Right ventricle myocardium inferior (tissue), 1 donor: ENCODE measurements at regions of chr3 and their contacts with region 1.

Region 1: DNA sequence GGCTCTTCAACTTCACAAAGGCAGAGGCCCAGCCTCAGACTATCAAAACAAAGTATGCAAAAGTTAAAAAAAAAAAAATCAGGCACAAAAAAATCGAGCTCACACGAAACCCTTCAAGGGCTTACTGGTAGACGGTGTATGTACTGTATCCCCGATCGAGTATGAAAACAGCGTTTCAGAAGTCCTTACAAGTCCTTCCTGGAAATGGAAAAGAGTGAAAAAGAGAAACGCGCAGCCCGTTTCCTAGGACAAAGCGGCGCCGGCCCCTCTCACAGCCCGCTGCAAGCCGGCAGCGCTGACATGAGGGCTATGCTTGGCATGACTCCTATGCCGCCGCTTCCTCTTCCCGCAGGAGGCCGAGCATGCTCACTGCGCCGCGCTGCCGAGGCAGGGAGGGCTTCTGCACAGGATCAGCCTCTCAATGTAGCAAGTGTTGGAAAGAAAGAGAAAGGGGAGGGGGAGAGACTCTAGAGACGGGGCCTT is at the start of gene VGLL4:
- DNase-seq: peak; percentile 96
- ATAC-seq: peak; percentile 93
- total RNA-seq, gene VGLL4: 26.8 TPM

Region 2: GRCh38 chr3:11019116-11019819 is 624.4 kb before region 1 on chr3:
- intact Hi-C with region 1: no loop called
- DNase-seq: no peak
- ATAC-seq: no peak

Region 3: DNA sequence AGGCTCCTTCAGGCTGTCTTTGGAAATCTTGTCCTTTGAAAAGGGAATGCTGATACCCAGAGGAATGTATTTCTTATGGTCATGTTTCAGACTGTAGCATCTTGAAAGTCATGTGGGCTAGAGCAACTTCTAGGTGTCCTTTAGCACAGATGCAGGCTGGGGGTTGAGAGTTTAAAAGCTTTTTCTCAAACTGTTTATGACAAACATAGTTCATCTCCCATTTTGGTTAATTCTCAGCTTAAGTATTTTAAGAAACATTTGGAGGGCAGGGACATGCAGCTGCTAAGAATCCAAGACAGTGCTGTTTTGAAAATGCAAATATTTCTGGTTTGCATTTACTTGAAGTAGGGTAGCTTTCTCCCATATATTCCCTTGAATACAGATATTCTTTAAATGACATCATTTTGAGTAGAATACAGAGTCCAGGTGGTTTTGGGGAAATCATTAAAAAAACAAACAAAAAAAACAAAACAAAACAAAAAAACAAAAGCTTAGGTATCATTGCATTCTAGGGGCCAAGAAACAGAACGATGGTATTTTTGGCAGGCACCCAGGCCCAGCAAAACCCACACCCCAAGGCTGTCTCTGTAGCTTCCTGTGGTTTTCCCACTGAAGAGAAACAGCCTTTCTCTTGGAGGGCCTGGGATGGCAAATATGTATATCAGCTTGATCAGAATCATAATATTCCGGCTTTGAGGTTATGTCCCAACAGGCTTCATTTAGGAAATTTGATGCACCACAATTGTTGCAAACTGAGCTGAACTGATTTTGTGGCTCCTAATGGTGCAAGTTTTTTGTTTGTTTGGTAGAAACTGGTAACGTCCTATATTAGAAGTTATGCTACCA is 251.4 kb before region 1 on chr3:
- intact Hi-C with region 1: loop called (anchors 5 kb)
- DNase-seq: no peak
- ATAC-seq: no peak

Region 4: GRCh38 chr3:11509173-11510000 is 134.3 kb before region 1 on chr3:
- intact Hi-C with region 1: loop called (anchors 5 kb)
- DNase-seq: peak; percentile 80
- ATAC-seq: peak; percentile 96

Region 5: DNA sequence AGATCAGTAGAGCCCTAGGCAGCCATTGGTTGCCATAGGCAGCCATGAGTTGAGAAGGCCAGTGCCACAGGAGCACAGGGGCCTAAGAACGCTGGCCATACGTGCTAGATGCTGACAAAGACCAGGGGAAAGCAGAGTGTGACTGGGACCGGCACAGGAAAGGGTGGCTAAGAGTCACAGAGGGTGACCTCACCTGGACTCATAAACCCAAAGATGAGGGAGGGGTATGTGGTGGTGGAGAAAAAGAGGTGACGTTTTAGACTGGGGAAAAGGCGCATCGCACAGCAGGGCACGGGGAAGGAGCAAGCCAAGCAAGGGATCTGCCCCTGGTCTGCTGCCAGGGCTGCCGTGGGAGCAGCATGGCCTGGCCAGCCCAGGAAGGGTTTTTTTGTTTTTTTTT is 122.5 kb before region 1 on chr3:
- intact Hi-C with region 1: no loop called
- DNase-seq: no peak
- ATAC-seq: no peak

Region 6: DNA sequence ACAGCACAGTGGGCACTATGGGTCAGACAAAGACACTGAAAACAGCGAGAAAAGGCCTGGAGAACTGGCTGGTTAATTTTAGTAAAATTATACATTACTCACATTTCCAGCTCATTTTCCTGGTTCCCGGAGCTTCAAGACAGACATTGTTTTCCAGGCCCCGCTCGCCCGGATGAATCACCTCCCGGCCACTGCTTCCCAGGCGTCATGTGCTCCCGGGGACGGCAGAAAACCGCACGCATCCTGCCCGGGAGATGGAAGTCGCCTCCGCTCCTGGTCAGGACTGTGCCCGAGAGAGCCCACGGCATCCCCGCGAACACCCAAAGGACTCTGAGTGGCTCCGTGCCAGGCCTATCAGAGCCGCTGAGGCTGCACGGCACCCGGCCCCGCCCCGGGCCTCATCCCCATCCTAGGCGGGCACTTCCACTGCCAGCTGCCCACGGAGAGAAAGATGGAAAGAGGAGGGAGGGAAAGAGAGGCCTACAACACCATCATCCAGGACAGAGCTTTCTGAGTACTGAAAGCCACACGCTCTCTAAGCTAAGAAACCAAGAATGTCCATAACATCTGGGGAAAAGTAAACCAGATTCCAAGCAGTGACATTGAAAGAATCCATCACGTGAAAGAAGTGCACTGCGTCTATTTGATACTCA is 75.0 kb before region 1 on chr3:
- intact Hi-C with region 1: loop called (anchors 5 kb)
- DNase-seq: no peak
- ATAC-seq: peak; percentile 21

Region 7: DNA sequence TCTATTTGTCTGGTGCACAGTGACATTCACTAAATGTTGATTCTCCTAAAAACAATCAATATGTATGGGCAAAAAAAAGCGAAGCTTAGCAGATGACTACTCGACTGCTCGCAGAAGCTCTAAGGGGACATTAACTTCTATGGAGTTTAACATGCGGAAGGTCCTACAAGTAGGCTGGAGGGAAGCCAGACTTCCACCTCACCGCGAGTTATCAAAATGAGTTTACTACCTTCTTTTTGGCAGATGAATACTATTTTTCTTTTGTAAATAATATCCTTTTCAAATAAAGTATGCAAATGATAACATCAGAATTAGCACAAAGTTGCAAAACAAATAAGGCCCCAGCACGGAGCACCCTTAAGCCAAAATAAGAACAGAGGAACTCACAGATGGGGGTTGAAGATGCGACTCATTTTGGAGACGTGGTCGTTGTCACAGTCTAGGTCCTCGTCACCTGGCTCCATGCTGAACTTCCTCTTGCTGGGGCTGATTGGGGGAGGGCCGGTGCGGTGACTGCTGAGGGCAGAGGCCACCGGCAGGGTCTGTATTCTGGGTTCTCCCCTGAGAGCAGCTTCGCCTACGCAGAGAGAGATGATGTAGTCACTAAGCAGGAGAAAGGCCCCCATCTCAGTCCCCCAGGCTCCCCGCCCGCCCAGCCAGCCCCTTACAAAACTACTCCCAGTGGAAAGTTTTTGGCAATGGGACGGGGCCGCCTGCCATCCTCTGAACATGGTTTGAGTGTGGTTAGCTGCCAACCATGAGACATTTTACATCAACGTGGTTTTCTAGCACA is 42.0 kb before region 1 on chr3:
- intact Hi-C with region 1: loop called (anchors 5 kb)
- DNase-seq: peak; percentile 76
- ATAC-seq: peak; percentile 48